Astrocyte of the cerebellum (primary cell): ENCODE measurements at regions of chr15 and their contacts with region 1.

Region 1: GRCh38 chr15:56211960-56212550 is 31.6 kb downstream of the RFX7 start:
- DNase-seq: no peak
- H3K4me3 ChIP-seq: no peak overlapping the region
- CTCF ChIP-seq: no peak

Region 2: DNA sequence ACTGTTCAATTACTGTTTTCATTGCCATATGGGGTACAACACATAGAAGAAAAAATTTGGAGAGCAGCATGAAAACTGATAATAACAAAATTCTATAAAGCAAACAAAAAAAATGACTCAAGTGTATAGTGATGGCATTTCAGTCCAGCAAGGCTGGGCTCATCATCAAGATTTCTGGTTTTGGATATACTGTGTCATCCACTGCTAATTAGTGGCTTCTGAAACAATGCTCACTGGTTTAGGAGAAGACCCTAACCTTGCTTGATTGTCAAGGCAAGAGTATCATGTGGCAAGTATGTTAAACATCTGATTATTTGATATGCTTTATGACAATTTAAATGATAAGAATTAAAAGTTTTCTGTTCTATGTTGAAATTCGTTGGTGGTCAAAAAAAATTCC is 65.3 kb before region 1 on chr15:
- in situ Hi-C with region 1: loop called (anchors 5 kb)
- DNase-seq: no peak
- H3K4me3 ChIP-seq: no peak overlapping the region
- CTCF ChIP-seq: no peak

Region 3: DNA sequence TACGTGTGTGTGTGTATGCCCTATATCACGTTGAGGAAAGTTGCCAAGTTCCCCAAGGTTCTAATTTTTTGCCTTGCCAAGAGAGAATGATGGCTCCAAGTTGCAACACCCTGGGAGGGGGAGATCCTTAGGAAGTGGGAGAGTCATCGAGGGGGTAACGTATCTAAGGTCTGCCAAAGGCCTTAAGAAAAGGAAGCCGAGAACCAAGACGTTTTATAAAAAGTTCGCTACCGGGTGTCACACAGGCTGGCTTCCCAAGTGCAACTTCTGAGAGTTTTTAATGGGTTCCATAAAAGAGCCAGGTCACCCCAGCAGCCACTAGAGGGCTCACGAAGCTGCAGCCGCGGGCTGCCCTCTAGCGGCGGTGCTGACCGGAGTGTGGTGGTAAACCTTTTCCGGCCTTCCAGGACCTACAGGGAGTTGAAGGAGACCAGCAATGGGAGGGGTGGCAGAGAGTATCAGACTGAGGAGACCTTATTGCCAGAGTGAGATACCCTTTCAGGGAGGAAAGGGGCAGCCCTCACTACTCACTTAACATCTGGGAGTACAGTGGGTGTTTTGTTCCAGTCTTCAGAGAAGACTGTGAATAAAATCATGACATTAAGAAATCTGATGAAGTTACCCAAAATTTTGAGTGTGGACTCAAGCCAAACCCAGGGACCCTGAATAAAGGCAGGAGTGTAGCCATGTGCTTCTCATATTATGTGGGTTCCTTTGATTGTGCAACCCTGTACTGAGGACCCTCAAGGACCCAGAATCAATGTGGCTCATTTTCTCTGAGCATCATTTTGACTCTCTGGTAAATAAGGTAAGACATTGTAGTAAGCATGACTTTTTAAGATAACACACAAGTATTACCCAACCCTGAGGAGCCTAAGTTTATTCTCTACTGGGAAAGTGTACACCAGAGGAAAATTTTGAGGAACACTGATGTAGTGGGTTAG is 34.1 kb after region 1 on chr15:
- in situ Hi-C with region 1: loop called (anchors 5 kb)
- DNase-seq: peak; percentile 71
- H3K4me3 ChIP-seq: no peak overlapping the region
- CTCF ChIP-seq: peak; percentile 100